ENCODE measurements at regions of chr18 and their contacts with region 1.

Region 1: GRCh38 chr18:55300421-55300935 is 287.5 kb downstream of the TCF4 start:
- DNase-seq: no peak
- ATAC-seq: no peak
- H3K4me3 Mint-ChIP-seq: peak overlapping the region; percentile 28
- H3K27ac Mint-ChIP-seq: peak overlapping the region; percentile 64
- H3K4me1 Mint-ChIP-seq: peaks cover 89% of the 10 kb centered on the region
- H3K27me3 Mint-ChIP-seq: no peaks in the 10 kb centered on the region
- CTCF ChIP-seq: no peak

Region 2: DNA sequence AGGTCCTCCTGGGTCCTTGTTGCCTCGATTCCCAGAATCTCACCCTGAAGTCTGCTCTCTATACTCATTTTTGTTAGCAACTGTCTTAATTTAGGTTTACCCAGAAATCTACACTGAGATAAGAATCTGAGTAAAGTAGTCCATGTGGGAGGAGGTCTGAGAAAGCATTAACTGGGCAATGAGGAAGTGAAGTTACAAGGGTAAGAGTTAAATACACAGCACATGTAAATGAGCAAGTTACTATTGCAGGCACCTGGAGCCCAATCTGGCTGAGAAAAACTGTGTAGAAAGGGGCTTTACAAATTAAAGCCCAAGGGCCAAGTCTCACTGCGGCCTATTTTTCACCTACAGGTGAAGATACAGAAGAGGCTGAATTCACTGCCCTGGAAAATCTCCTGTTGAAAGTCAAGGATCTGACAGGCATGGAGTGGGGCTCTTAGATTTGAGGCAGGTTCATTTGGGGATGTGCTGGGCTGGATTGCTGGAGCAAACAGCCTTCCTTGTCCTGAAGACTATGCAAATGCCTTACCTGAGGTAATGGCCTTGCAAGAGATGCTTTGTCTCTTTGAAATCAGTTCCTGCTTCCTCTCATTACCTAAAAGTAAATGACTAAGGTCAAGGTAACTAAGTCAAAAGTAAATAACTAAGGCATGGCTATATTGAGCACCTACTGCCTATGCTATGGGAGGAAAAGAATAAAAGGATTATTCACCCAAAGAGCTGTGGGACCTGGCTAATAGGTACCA is 793.8 kb before region 1 on chr18:
- CTCF ChIA-PET with region 1: no interaction called
- POLR2A ChIA-PET with region 1: no interaction called
- intact Hi-C with region 1: no loop called
- DNase-seq: no peak
- ATAC-seq: no peak
- H3K4me3 Mint-ChIP-seq: no peak overlapping the region
- H3K27ac Mint-ChIP-seq: no peak overlapping the region
- H3K4me1 Mint-ChIP-seq: no peaks in the 10 kb centered on the region
- H3K27me3 Mint-ChIP-seq: peaks cover 8% of the 10 kb centered on the region
- CTCF ChIP-seq: no peak

Region 3: GRCh38 chr18:55079481-55080355 is 220.8 kb before region 1 on chr18:
- CTCF ChIA-PET with region 1: no interaction called
- POLR2A ChIA-PET with region 1: interaction called, 12 read pairs
- intact Hi-C with region 1: no loop called
- DNase-seq: no peak
- ATAC-seq: no peak
- H3K4me3 Mint-ChIP-seq: no peak overlapping the region
- H3K27ac Mint-ChIP-seq: peak overlapping the region; percentile 20
- H3K4me1 Mint-ChIP-seq: peaks cover 4% of the 10 kb centered on the region
- H3K27me3 Mint-ChIP-seq: no peaks in the 10 kb centered on the region
- CTCF ChIP-seq: no peak

Region 4: GRCh38 chr18:55166260-55166598 is 134.2 kb before region 1 on chr18:
- CTCF ChIA-PET with region 1: no interaction called
- POLR2A ChIA-PET with region 1: no interaction called
- intact Hi-C with region 1: no loop called
- DNase-seq: no peak
- ATAC-seq: no peak
- H3K4me3 Mint-ChIP-seq: no peak overlapping the region
- H3K27ac Mint-ChIP-seq: no peak overlapping the region
- H3K4me1 Mint-ChIP-seq: no peaks in the 10 kb centered on the region
- H3K27me3 Mint-ChIP-seq: no peaks in the 10 kb centered on the region
- CTCF ChIP-seq: no peak

Region 5: GRCh38 chr18:55280503-55280902 is 20.0 kb before region 1 on chr18:
- CTCF ChIA-PET with region 1: no interaction called
- POLR2A ChIA-PET with region 1: interaction called, 8 read pairs
- intact Hi-C with region 1: loop called (anchors 1 kb)
- DNase-seq: no peak
- ATAC-seq: no peak
- H3K4me3 Mint-ChIP-seq: no peak overlapping the region
- H3K27ac Mint-ChIP-seq: peak overlapping the region; percentile 68
- H3K4me1 Mint-ChIP-seq: peaks cover 48% of the 10 kb centered on the region
- H3K27me3 Mint-ChIP-seq: no peaks in the 10 kb centered on the region
- CTCF ChIP-seq: no peak

Region 6: DNA sequence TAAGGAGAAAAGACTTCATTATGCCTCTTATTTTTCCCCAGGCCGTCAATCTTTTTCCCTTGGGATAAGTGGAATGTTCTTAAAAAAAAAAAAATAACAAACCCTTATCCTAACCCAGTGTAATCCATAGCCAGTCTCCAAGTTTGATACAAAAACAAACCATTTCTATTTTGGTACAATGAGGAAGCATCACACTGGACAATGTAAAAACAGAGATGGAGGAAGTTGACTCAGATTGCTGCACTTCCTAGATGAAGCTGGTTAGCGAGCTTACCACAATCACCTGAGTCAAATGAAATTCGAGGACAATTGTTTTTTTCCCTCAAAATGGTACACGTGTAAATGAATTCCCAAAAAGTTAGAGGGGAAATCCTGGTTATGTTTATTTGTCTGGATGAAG is 27.8 kb after region 1 on chr18:
- CTCF ChIA-PET with region 1: interaction called, 3 read pairs
- POLR2A ChIA-PET with region 1: interaction called, 15 read pairs
- intact Hi-C with region 1: no loop called
- DNase-seq: no peak
- ATAC-seq: peak; percentile 60
- H3K4me3 Mint-ChIP-seq: no peak overlapping the region
- H3K27ac Mint-ChIP-seq: peak overlapping the region; percentile 81
- H3K4me1 Mint-ChIP-seq: peaks cover 60% of the 10 kb centered on the region
- H3K27me3 Mint-ChIP-seq: no peaks in the 10 kb centered on the region
- CTCF ChIP-seq: no peak

Region 7: GRCh38 chr18:55401638-55402191 is 101.2 kb after region 1 on chr18:
- CTCF ChIA-PET with region 1: no interaction called
- POLR2A ChIA-PET with region 1: no interaction called
- intact Hi-C with region 1: no loop called
- DNase-seq: no peak
- ATAC-seq: no peak
- H3K4me3 Mint-ChIP-seq: no peak overlapping the region
- H3K27ac Mint-ChIP-seq: no peak overlapping the region
- H3K4me1 Mint-ChIP-seq: peaks cover 26% of the 10 kb centered on the region
- H3K27me3 Mint-ChIP-seq: no peaks in the 10 kb centered on the region
- CTCF ChIP-seq: no peak

Measured in activated B cell treated with CpG ODN at 0.5 μM for 24 hours (primary cell).